Activated T-helper 2 cell treated with anti-CD3 and anti-CD28 coated beads, Interferon-gamma antibody, Interleukin-2, Interleukin-4, amounts not matched to agents 10 μg/mL and 5 μg/mL and 100 μg/mL, durations not matched to agents 14 hours and 24 hours and 36 hours (primary cell): ENCODE measurements at regions of chr10 and their contacts with region 1.

Region 1: DNA sequence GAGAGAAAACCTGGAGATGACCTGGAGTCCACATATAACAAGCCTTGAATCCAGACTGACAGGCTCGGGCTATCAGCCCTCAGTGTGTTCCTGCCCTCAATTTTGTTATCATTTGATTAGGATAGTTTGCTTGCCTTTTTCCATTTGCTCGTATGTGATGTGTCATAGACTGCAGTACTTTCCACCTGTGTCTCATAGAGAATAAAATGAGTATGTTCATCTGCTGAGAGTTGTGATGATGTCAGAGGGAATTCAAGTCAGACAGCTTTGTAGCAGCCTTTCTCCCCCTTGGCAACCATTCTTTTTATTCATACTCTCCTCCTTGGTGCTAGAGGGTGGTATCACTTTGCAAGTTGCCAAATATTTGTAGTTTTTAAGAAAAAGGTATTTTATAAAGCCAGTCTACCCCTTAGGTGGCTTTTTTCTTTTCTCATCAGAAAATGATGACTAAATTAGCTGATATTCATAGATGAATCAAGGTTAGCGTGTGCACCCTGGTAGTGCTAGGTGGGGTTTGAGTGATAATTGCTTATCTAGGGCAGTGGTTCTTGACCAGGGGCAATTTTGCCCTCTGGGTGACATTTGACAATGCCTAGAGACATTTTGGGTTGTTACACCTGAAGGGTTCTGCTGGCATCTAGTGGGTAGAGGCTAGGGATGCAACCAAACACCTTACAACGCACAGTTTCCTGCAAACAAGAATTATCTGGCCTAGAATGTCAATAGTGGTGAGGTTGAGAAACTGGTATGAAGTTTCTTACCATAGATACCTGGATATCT is 5.4 kb downstream of the SGPL1 start:
- DNase-seq: no peak
- H3K4me3 Mint-ChIP-seq: peak overlapping the region; percentile 41
- H3K27ac Mint-ChIP-seq: peak overlapping the region; percentile 87
- H3K4me1 Mint-ChIP-seq: peaks cover 49% of the 10 kb centered on the region
- H3K27me3 Mint-ChIP-seq: no peaks in the 10 kb centered on the region

Region 2: GRCh38 chr10:70832852-70833528 is 11.8 kb after region 1 on chr10:
- intact Hi-C with region 1: loop called (anchors 1 kb)
- DNase-seq: no peak
- H3K4me3 Mint-ChIP-seq: peak overlapping the region; percentile 47
- H3K27ac Mint-ChIP-seq: peak overlapping the region; percentile 87
- H3K4me1 Mint-ChIP-seq: peaks cover 66% of the 10 kb centered on the region
- H3K27me3 Mint-ChIP-seq: no peaks in the 10 kb centered on the region

Region 3: GRCh38 chr10:70863470-70864160 is 42.4 kb after region 1 on chr10:
- intact Hi-C with region 1: loop called (anchors 1 kb)
- DNase-seq: no peak
- H3K4me3 Mint-ChIP-seq: no peak overlapping the region
- H3K27ac Mint-ChIP-seq: peak overlapping the region; percentile 62
- H3K4me1 Mint-ChIP-seq: peaks cover 30% of the 10 kb centered on the region
- H3K27me3 Mint-ChIP-seq: no peaks in the 10 kb centered on the region

Region 4: GRCh38 chr10:70880077-70880534 is 58.9 kb after region 1 on chr10:
- intact Hi-C with region 1: no loop called
- DNase-seq: peak; percentile 61
- H3K4me3 Mint-ChIP-seq: no peak overlapping the region
- H3K27ac Mint-ChIP-seq: peak overlapping the region; percentile 51
- H3K4me1 Mint-ChIP-seq: peaks cover 16% of the 10 kb centered on the region
- H3K27me3 Mint-ChIP-seq: no peaks in the 10 kb centered on the region

Region 5: GRCh38 chr10:70967596-70968587 is 146.7 kb after region 1 on chr10:
- intact Hi-C with region 1: no loop called
- DNase-seq: no peak
- H3K4me3 Mint-ChIP-seq: no peak overlapping the region
- H3K27ac Mint-ChIP-seq: no peak overlapping the region
- H3K4me1 Mint-ChIP-seq: peaks cover 4% of the 10 kb centered on the region
- H3K27me3 Mint-ChIP-seq: peaks cover 7% of the 10 kb centered on the region

Region 6: GRCh38 chr10:71270301-71271220 is 449.4 kb after region 1 on chr10:
- intact Hi-C with region 1: no loop called
- DNase-seq: no peak
- H3K4me3 Mint-ChIP-seq: no peak overlapping the region
- H3K27ac Mint-ChIP-seq: no peak overlapping the region
- H3K4me1 Mint-ChIP-seq: no peaks in the 10 kb centered on the region
- H3K27me3 Mint-ChIP-seq: no peaks in the 10 kb centered on the region